ENCODE measurements at regions of chr9 and their contacts with region 1.

Region 1: DNA sequence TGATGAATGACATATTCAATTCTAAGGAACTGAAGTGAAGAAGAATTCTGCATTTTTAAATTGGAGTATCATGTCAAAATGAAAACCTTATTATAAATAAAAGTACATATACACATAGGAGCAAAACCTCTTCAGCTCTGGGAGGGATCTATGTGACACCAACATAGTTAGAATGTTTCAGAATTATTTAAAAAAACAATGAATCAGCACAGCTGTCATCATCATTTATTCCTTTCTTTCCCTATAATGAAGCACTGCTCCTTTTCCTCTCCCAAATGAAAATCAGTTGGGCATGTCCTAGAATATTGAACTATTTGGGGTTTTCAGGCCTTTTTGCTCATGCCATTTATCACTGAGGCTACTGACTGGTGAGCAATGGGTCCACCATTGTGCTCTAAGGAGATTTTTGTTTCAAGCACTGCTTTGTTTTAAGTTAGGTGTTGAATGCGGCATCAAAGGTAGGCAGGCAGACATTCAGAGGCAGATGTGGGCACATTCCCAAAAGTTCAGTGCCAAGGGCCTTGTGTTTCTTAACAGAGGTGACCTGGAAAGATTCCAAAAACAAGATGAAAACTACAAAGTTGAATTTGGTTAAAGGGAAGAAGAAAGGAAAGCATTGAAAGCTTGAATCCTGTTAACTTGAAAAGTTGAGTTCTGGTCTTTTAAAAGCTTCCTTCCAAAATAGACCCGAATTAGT is 126.4 kb upstream of the ADAMTSL1 start:
- DNase-seq: peak in 1 of 2 donors; percentile 80
- H3K4me3 ChIP-seq: no peak overlapping the region
- H3K27ac ChIP-seq: peak overlapping the region in 1 of 2 donors; percentile 55
- H3K4me1 ChIP-seq: no peaks in the 10 kb centered on the region
- H3K27me3 ChIP-seq: no peaks in the 10 kb centered on the region
- CTCF ChIP-seq: no peak
- POLR2A ChIP-seq: no peak

Region 2: GRCh38 chr9:18037981-18038380 is 309.6 kb before region 1 on chr9:
- intact Hi-C with region 1: no loop called
- DNase-seq: no peak
- H3K4me3 ChIP-seq: no peak overlapping the region
- H3K27ac ChIP-seq: no peak overlapping the region
- H3K4me1 ChIP-seq: no peaks in the 10 kb centered on the region
- H3K27me3 ChIP-seq: no peaks in the 10 kb centered on the region
- CTCF ChIP-seq: no peak
- POLR2A ChIP-seq: no peak

Region 3: GRCh38 chr9:18319918-18320445 is 27.6 kb before region 1 on chr9:
- intact Hi-C with region 1: loop called (anchors 2 kb)
- DNase-seq: no peak
- H3K4me3 ChIP-seq: no peak overlapping the region
- H3K27ac ChIP-seq: no peak overlapping the region
- H3K4me1 ChIP-seq: no peaks in the 10 kb centered on the region
- H3K27me3 ChIP-seq: no peaks in the 10 kb centered on the region
- CTCF ChIP-seq: no peak
- POLR2A ChIP-seq: no peak

Region 4: GRCh38 chr9:18331808-18332209 is 15.7 kb before region 1 on chr9:
- intact Hi-C with region 1: loop called (anchors 2 kb)
- DNase-seq: no peak
- H3K4me3 ChIP-seq: no peak overlapping the region
- H3K27ac ChIP-seq: peak overlapping the region in 1 of 2 donors; percentile 25
- H3K4me1 ChIP-seq: no peaks in the 10 kb centered on the region
- H3K27me3 ChIP-seq: no peaks in the 10 kb centered on the region
- CTCF ChIP-seq: no peak
- POLR2A ChIP-seq: no peak